A673 (cell line): ENCODE measurements at regions of chr2 and their contacts with region 1.

Region 1: GRCh38 chr2:165239230-165239629 is at the start of gene SCN2A:
- DNase-seq: peak; percentile 76
- H3K4me3 ChIP-seq: no peak within 1 kb of the TSS
- H3K27ac ChIP-seq: no peak within 1 kb of the TSS
- H3K4me1 ChIP-seq: peaks cover 5% of the 10 kb centered on the region
- H3K27me3 ChIP-seq: no peaks in the 10 kb centered on the region
- CTCF ChIP-seq: peak; percentile 81
- total RNA-seq, gene SCN2A: 0.73 and 0.79 TPM in 2 replicates

Region 2: DNA sequence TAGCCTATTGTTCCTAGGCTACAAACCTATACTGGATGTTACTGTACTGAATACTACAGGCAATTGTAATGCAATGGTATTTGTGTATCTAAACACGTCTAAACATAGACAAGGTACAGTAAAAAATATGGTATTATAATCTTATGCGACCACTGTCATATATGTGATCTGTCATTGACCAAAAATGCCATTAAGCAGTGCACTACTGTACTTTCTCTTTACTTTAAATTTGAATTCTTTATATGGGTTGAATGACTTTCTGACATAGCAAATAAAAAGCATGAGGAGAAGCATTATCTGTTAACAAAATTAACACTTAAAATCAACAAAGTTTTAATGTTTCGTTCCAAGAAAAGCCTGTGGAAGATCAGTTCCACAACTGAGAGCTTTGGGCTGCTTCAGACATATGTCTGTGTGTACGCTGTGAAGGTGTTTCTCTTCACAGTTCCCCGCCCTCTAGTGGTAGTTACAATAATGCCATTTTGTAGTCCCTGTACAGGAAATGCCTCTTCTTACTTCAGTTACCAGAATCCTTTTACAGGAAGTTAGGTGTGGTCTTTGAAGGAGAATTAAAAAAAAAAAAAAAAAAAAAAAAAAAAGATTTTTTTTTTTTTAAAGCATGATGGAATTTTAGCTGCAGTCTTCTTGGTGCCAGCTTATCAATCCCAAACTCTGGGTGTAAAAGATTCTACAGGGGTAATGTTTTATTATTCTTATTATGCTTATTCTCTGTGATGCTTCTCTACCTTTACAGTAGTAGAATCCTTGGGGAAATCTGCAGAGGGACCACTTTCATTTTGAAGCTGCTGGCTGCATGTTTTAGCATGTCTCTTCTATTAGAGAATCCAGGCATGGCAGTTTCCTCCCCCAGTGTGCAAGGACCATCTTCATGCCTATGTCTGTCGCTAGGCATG is 54.5 kb after region 1 on chr2:
- CTCF ChIA-PET with region 1: interaction called, 4 read pairs
- POLR2A ChIA-PET with region 1: no interaction called
- intact Hi-C with region 1: loop called (anchors 1 kb)
- DNase-seq: peak; percentile 95
- H3K4me3 ChIP-seq: no peak overlapping the region
- H3K27ac ChIP-seq: no peak overlapping the region
- H3K4me1 ChIP-seq: peaks cover 11% of the 10 kb centered on the region
- H3K27me3 ChIP-seq: no peaks in the 10 kb centered on the region
- CTCF ChIP-seq: peak; percentile 81

Region 3: GRCh38 chr2:165305391-165306096 is 66.3 kb after region 1 on chr2:
- CTCF ChIA-PET with region 1: no interaction called
- POLR2A ChIA-PET with region 1: no interaction called
- intact Hi-C with region 1: loop called (anchors 5 kb)
- DNase-seq: no peak
- H3K4me3 ChIP-seq: no peak overlapping the region
- H3K27ac ChIP-seq: no peak overlapping the region
- H3K4me1 ChIP-seq: no peaks in the 10 kb centered on the region
- H3K27me3 ChIP-seq: no peaks in the 10 kb centered on the region
- CTCF ChIP-seq: no peak

Region 4: DNA sequence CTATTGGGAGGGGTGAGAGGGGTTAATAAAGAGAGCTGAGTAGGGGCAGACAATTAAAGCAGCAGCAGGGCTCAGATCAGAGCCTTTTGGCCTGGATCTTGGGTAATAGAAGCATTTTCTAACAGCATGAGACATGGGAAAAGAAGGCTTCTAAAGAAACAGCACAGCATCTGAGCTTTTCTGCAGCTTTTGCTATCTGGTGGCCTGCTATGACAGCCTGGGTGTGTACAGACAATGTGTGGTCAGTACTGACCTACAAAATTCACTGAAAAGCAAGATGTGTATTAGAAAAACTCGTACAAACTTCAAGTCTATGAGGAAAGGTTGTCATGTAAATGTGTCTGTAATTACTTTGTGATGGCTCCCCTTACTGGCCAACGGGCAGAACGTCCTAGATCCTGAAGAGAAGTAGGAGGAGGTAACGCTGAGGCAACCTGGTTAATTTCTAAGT is 459.2 kb after region 1 on chr2:
- CTCF ChIA-PET with region 1: no interaction called
- POLR2A ChIA-PET with region 1: no interaction called
- intact Hi-C with region 1: loop called (anchors 5 kb)
- DNase-seq: peak; percentile 85
- H3K4me3 ChIP-seq: no peak overlapping the region
- H3K27ac ChIP-seq: peak overlapping the region; percentile 6
- H3K4me1 ChIP-seq: peaks cover 23% of the 10 kb centered on the region
- H3K27me3 ChIP-seq: no peaks in the 10 kb centered on the region
- CTCF ChIP-seq: peak; percentile 71

Region 5: DNA sequence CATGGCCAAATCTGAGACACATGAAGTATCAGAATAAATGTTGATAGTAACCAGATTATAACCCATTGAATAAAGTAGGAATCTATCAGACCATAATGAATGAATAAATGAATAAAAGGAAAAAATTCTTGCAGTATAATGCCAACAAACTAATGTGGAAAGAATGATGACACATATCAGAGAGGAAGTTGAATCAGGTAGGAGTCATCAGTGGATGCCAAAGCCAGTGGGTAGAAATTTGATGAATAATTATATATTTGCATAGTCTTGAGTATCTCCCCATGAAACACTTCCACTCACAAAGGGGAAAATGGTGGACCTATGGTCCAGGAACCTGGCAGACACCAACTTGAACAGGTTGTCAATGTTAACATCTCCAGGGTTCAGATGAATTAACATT is 486.2 kb after region 1 on chr2:
- CTCF ChIA-PET with region 1: no interaction called
- POLR2A ChIA-PET with region 1: no interaction called
- intact Hi-C with region 1: no loop called
- DNase-seq: peak; percentile 32
- H3K4me3 ChIP-seq: no peak overlapping the region
- H3K27ac ChIP-seq: no peak overlapping the region
- H3K4me1 ChIP-seq: no peaks in the 10 kb centered on the region
- H3K27me3 ChIP-seq: no peaks in the 10 kb centered on the region
- CTCF ChIP-seq: no peak

Region 6: GRCh38 chr2:165778653-165779451 is 539.6 kb after region 1 on chr2:
- CTCF ChIA-PET with region 1: interaction called, 7 read pairs
- POLR2A ChIA-PET with region 1: no interaction called
- intact Hi-C with region 1: loop called (anchors 2 kb)
- DNase-seq: peak; percentile 66
- H3K4me3 ChIP-seq: no peak overlapping the region
- H3K27ac ChIP-seq: no peak overlapping the region
- H3K4me1 ChIP-seq: no peaks in the 10 kb centered on the region
- H3K27me3 ChIP-seq: no peaks in the 10 kb centered on the region
- CTCF ChIP-seq: peak; percentile 47

Region 7: DNA sequence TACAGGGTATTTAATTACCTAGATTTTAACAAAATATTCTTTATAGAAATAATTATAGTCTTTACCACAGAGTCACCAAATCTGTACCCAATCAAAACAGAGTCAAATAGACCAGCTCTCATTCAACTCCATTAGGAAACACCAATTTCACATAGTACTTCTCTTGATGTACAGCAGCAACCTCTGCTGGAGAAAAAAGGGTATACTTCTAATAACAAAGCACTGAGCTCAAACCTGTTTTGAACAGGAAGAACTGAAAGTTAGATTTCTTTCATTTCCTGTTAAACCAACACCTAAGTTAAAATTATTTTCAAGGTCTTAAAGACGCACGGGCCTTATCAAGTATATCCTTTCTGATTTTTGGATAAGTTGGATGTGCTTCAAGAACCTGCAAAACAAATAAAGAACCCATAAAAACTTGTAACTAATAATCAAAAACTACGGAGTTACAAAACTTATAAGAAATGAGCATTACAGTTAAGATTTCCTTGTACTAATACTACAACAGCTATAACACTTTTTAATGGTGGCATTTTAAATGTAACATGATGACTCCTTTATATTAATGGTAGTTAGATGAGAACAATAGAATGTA is 635.3 kb after region 1 on chr2:
- CTCF ChIA-PET with region 1: interaction called, 13 read pairs
- POLR2A ChIA-PET with region 1: no interaction called
- intact Hi-C with region 1: loop called (anchors 2 kb)
- DNase-seq: peak; percentile 85
- H3K4me3 ChIP-seq: no peak overlapping the region
- H3K27ac ChIP-seq: no peak overlapping the region
- H3K4me1 ChIP-seq: no peaks in the 10 kb centered on the region
- H3K27me3 ChIP-seq: no peaks in the 10 kb centered on the region
- CTCF ChIP-seq: peak; percentile 76